ENCODE measurements at regions of chr1 and their contacts with region 1.

Region 1: DNA sequence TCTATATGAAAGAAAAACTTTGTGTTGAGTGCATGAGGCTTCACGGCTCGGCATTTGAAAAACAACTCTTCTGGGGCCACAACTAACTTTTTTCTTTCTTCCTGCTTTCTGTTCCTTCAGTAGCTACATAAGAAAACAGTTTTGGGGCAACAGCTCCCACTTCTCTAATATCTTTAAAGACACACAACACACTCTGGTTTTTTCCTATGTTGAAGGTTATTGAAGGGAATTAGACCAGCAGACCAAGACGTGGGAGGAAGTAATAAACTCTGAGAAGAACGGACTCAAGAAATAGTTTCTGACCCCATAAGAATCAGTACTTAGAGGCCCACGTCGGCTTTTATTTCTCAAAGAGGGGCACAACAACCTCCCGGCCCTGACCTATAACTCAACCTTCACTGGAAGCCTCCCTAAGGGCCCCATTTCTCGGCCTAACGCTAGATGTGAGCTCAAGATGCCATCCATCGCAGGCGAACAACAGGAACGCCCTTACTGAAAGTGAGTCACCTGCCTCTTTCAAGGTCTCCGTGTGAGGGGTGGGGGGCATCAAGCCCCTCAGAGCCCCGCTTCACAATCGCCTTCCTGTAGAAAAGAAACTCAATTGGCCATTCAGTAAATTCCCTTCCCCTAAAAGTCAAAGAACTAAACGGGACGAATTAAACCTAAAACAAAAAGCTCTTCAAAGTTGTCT is 844 bp downstream of the ZMYM6 start:
- DNase-seq: peak in 5 of 9 donors; percentile 4 to 42 (median 7)
- ATAC-seq: peak; percentile 36
- H3K4me3 ChIP-seq: peak overlapping the region; percentile 100
- H3K4me3 Mint-ChIP-seq: peak overlapping the region; percentile 87 to 100 (median 98)
- H3K27ac ChIP-seq: peak overlapping the region; percentile 82
- H3K27ac Mint-ChIP-seq: peak overlapping the region; percentile 92 to 99 (median 97)
- H3K4me1 ChIP-seq: peaks cover 15 to 17% of the 10 kb centered on the region in 2 donors
- H3K4me1 Mint-ChIP-seq: peaks cover 24 to 53% (median 43%) of the 10 kb centered on the region in 7 donors
- H3K27me3 ChIP-seq: no peaks in the 10 kb centered on the region
- H3K27me3 Mint-ChIP-seq: peaks cover 0 to 2% (median 0%) of the 10 kb centered on the region in 5 donors

Region 2: DNA sequence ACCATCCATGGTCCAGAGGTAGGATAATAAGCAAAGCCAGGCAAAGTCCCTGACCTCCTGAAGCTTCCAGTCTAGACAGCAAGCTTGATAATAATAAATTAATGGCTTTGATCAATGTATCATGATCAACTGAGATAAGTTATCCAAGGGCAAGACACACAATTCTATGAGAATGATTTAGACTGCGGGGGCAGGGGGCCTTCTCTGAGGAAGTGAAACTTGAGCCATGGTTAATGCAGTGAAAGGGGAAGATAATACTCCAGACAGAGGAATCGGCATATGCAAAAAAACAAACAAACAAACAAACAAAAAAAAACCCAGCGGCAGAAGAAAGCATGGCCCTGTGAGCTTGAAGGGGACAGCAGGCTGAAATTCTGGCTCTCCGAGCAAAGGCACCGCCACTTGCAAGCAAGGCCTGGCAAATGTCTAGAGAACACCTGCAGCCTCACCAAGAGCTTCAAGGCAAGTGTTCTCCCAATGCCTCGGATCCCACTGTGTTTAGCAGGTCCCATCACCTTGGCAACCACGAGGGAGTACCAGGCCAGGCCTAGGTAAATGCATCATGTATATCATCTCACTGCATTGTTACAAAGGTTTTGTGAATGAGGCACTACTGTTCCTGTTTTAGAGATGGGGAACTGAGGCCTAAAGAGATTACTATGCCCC is 890.8 kb before region 1 on chr1:
- CTCF ChIA-PET with region 1: no interaction called
- POLR2A ChIA-PET with region 1: no interaction called
- intact Hi-C with region 1: no loop called
- DNase-seq: no peak
- ATAC-seq: no peak
- H3K4me3 ChIP-seq: no peak overlapping the region
- H3K4me3 Mint-ChIP-seq: no peak overlapping the region
- H3K27ac ChIP-seq: no peak overlapping the region
- H3K27ac Mint-ChIP-seq: no peak overlapping the region
- H3K4me1 ChIP-seq: no peaks in the 10 kb centered on the region
- H3K4me1 Mint-ChIP-seq: no peaks in the 10 kb centered on the region
- H3K27me3 ChIP-seq: no peaks in the 10 kb centered on the region
- H3K27me3 Mint-ChIP-seq: peaks cover 0 to 18% (median 6%) of the 10 kb centered on the region in 5 donors

Region 3: GRCh38 chr1:34627465-34628240 is 403.2 kb before region 1 on chr1:
- CTCF ChIA-PET with region 1: no interaction called
- POLR2A ChIA-PET with region 1: no interaction called
- intact Hi-C with region 1: no loop called
- DNase-seq: no peak
- ATAC-seq: no peak
- H3K4me3 ChIP-seq: no peak overlapping the region
- H3K4me3 Mint-ChIP-seq: no peak overlapping the region
- H3K27ac ChIP-seq: no peak overlapping the region
- H3K27ac Mint-ChIP-seq: no peak overlapping the region
- H3K4me1 ChIP-seq: no peaks in the 10 kb centered on the region
- H3K4me1 Mint-ChIP-seq: peaks cover 0 to 3% (median 0%) of the 10 kb centered on the region in 7 donors
- H3K27me3 ChIP-seq: no peaks in the 10 kb centered on the region
- H3K27me3 Mint-ChIP-seq: peaks cover 4 to 20% (median 9%) of the 10 kb centered on the region in 5 donors

Region 4: GRCh38 chr1:34852677-34853217 is 178.2 kb before region 1 on chr1:
- CTCF ChIA-PET with region 1: no interaction called
- POLR2A ChIA-PET with region 1: no interaction called
- intact Hi-C with region 1: loop called (anchors 5 kb)
- DNase-seq: peak; percentile 75 to 91 (median 89)
- ATAC-seq: peak; percentile 100
- H3K4me3 ChIP-seq: no peak overlapping the region
- H3K4me3 Mint-ChIP-seq: peak overlapping the region in 1 of 10 donors; percentile 7
- H3K27ac ChIP-seq: peak overlapping the region; percentile 9
- H3K27ac Mint-ChIP-seq: peak overlapping the region; percentile 6 to 83 (median 53)
- H3K4me1 ChIP-seq: peaks cover 2 to 5% of the 10 kb centered on the region in 2 donors
- H3K4me1 Mint-ChIP-seq: peaks cover 29 to 47% (median 34%) of the 10 kb centered on the region in 7 donors
- H3K27me3 ChIP-seq: no peaks in the 10 kb centered on the region
- H3K27me3 Mint-ChIP-seq: no peaks in the 10 kb centered on the region

Region 5: GRCh38 chr1:34865981-34866761 is 164.7 kb before region 1 on chr1:
- CTCF ChIA-PET with region 1: interaction called, 4 read pairs
- POLR2A ChIA-PET with region 1: interaction called, 3 read pairs
- intact Hi-C with region 1: loop called in 1 of 2 experiments (anchors 2 kb)
- DNase-seq: peak; percentile 87 to 97 (median 90)
- ATAC-seq: peak; percentile 92
- H3K4me3 ChIP-seq: peak overlapping the region; percentile 66
- H3K4me3 Mint-ChIP-seq: peak overlapping the region; percentile 82 to 92 (median 86)
- H3K27ac ChIP-seq: peak overlapping the region; percentile 83
- H3K27ac Mint-ChIP-seq: peak overlapping the region; percentile 80 to 92 (median 88)
- H3K4me1 ChIP-seq: peaks cover 19 to 22% of the 10 kb centered on the region in 2 donors
- H3K4me1 Mint-ChIP-seq: peaks cover 28 to 54% (median 44%) of the 10 kb centered on the region in 7 donors
- H3K27me3 ChIP-seq: no peaks in the 10 kb centered on the region
- H3K27me3 Mint-ChIP-seq: peaks cover 0 to 6% (median under 1%) of the 10 kb centered on the region in 5 donors

Region 6: DNA sequence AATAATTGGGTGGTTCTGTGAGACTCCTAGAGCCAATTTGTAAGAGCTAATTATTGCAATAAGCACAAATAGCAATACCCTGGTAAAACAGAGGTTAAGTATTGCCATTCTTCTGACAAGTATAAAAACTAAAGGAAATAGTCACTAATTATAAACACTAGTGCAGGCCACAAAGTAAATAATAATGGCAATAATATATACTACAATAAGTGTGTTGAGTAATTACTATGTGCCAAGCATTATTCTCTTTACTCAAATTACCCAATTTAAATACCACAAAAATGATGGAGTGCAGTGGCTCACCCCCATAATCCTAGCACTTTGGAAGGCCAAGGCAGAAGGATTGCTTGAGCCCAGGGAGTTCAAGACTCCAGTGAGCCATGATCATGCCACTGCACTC is 14.5 kb before region 1 on chr1:
- CTCF ChIA-PET with region 1: interaction called, 3 read pairs
- POLR2A ChIA-PET with region 1: interaction called, 10 read pairs
- intact Hi-C with region 1: no loop called
- DNase-seq: no peak
- ATAC-seq: no peak
- H3K4me3 ChIP-seq: no peak overlapping the region
- H3K4me3 Mint-ChIP-seq: no peak overlapping the region
- H3K27ac ChIP-seq: no peak overlapping the region
- H3K27ac Mint-ChIP-seq: peak overlapping the region in 1 of 9 donors; percentile 32
- H3K4me1 ChIP-seq: no peaks in the 10 kb centered on the region
- H3K4me1 Mint-ChIP-seq: peaks cover 0 to 4% (median 0%) of the 10 kb centered on the region in 7 donors
- H3K27me3 ChIP-seq: no peaks in the 10 kb centered on the region
- H3K27me3 Mint-ChIP-seq: no peaks in the 10 kb centered on the region

Region 7: DNA sequence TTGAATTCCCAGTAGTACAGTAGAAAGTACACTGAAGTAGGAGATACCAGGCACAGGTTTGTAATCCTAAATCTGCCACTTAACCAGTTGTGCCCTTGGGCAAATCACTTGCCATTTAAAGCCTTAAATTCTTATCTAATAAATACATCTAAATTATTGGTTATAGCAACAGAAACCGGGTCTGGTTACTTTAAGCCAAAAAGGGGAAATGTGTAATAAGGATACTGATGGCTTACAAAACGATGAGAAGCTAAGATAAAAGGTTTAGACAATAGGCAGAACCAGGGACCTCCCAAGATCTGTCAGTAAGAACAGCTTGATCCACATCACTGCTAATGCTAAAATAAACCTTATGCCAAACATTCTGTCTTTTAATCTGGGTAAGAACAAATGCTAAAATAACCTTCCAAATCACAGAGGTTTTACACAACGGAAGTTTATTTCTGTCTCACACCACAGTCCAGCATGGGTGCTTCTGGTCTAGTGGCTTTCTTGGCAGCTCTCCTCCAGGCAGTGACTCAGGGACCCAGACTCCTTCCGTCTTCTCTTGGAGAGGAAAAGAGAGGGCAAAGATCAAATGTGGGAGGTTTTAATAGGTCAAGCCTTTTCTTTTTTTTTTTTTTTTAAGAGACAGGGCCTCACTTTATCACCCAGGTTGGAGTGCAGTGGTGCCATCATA is 31.8 kb after region 1 on chr1:
- CTCF ChIA-PET with region 1: no interaction called
- POLR2A ChIA-PET with region 1: no interaction called
- intact Hi-C with region 1: no loop called
- DNase-seq: no peak
- ATAC-seq: no peak
- H3K4me3 ChIP-seq: no peak overlapping the region
- H3K4me3 Mint-ChIP-seq: no peak overlapping the region
- H3K27ac ChIP-seq: no peak overlapping the region
- H3K27ac Mint-ChIP-seq: no peak overlapping the region
- H3K4me1 ChIP-seq: no peaks in the 10 kb centered on the region
- H3K4me1 Mint-ChIP-seq: peaks cover 0 to 5% (median 0%) of the 10 kb centered on the region in 7 donors
- H3K27me3 ChIP-seq: no peaks in the 10 kb centered on the region
- H3K27me3 Mint-ChIP-seq: peaks cover 14 to 25% (median 20%) of the 10 kb centered on the region in 5 donors

Region 8: GRCh38 chr1:35268282-35269200 is 237.6 kb after region 1 on chr1 and contains the start of gene ZMYM4:
- CTCF ChIA-PET with region 1: no interaction called
- POLR2A ChIA-PET with region 1: no interaction called
- intact Hi-C with region 1: loop called (anchors 1 to 5 kb)
- DNase-seq: peak; percentile 67 to 91 (median 87)
- ATAC-seq: peak; percentile 96
- H3K4me3 ChIP-seq: peak within 1 kb of the TSS; percentile 58
- H3K4me3 Mint-ChIP-seq: peak within 1 kb of the TSS; percentile 78 to 98 (median 90)
- H3K27ac ChIP-seq: peak within 1 kb of the TSS; percentile 88
- H3K27ac Mint-ChIP-seq: peak within 1 kb of the TSS; percentile 80 to 99 (median 93)
- H3K4me1 ChIP-seq: peaks cover 6 to 20% of the 10 kb centered on the region in 2 donors
- H3K4me1 Mint-ChIP-seq: peaks cover 22 to 44% (median 40%) of the 10 kb centered on the region in 7 donors
- H3K27me3 ChIP-seq: no peaks in the 10 kb centered on the region
- H3K27me3 Mint-ChIP-seq: peaks cover 0 to 5% (median 0%) of the 10 kb centered on the region in 5 donors
- total RNA-seq, gene ZMYM4: 32.1 to 52.9 (median 45.6) TPM

Region 9: GRCh38 chr1:35641233-35641866 is 610.4 kb after region 1 on chr1 and contains the start of gene PSMB2:
- CTCF ChIA-PET with region 1: no interaction called
- POLR2A ChIA-PET with region 1: no interaction called
- intact Hi-C with region 1: loop called in 1 of 2 experiments (anchors 5 kb)
- DNase-seq: peak; percentile 89 to 96 (median 95)
- ATAC-seq: peak; percentile 97
- H3K4me3 ChIP-seq: peak within 1 kb of the TSS; percentile 89
- H3K4me3 Mint-ChIP-seq: peak within 1 kb of the TSS; percentile 97 to 100 (median 100)
- H3K27ac ChIP-seq: peak within 1 kb of the TSS; percentile 92
- H3K27ac Mint-ChIP-seq: peak within 1 kb of the TSS; percentile 98 to 100 (median 99)
- H3K4me1 ChIP-seq: peaks cover 18 to 19% of the 10 kb centered on the region in 2 donors
- H3K4me1 Mint-ChIP-seq: peaks cover 16 to 54% (median 42%) of the 10 kb centered on the region in 7 donors
- H3K27me3 ChIP-seq: no peaks in the 10 kb centered on the region
- H3K27me3 Mint-ChIP-seq: peaks cover 12 to 44% (median 30%) of the 10 kb centered on the region in 5 donors
- total RNA-seq, gene PSMB2: 20.4 to 93.5 (median 23.5) TPM

Measured in naive thymus-derived CD4-positive, alpha-beta T cell (primary cell).